Activated T-helper 1 cell treated with anti-CD3 and anti-CD28 coated beads, Interleukin-12 subunit alpha, Interleukin-12 subunit beta, Interleukin-2, Interleukin-4 antibody, amounts not matched to agents 30 ng/mL and 10 ng/mL and 1 ng/mL, durations not matched to agents 14 hours and 24 hours and 36 hours (primary cell): ENCODE measurements at regions of chr1 and their contacts with region 1.

Region 1: DNA sequence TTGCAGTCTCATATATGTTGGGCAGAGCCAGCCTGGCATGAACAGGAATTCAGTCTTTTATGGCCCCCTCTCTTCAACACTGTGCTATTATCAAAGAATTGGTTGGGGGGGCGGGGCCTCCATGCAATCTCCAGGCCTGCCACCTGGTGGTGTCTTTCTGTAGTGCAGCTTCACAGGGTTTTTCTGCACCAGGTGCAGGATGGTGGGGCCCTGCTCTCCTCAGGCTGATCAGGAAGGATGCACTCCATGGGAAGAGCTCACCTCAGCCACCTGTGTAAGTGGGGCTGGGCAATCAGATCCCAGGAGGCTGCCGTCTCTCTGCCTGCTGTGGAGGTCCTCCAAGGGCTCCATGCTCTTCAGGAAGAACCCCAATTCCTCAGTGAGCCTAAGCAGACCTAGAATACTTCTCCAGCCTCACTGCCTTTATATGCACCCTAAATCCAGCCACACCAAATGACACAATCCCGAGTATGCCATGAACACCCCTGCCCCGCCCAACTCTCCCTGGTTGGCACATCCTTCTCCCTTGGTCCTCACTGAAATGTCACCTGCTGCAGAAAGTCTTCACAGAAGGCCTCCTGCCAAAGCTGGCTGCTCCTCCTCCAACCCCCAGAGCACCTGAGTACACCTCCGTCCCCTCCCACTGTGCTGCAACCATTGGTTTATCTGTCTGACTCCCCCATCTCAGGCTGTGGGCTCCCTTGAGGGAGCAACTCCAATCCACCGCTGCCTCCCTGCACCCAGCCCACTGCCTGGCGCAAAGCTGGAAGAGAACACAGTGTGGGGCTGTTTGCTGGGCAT is 16.5 kb downstream of the STK40 start:
- DNase-seq: peak; percentile 65
- H3K4me3 Mint-ChIP-seq: no peak overlapping the region
- H3K27ac Mint-ChIP-seq: peak overlapping the region; percentile 35
- H3K4me1 Mint-ChIP-seq: peaks cover 69% of the 10 kb centered on the region
- H3K27me3 Mint-ChIP-seq: no peaks in the 10 kb centered on the region

Region 2: DNA sequence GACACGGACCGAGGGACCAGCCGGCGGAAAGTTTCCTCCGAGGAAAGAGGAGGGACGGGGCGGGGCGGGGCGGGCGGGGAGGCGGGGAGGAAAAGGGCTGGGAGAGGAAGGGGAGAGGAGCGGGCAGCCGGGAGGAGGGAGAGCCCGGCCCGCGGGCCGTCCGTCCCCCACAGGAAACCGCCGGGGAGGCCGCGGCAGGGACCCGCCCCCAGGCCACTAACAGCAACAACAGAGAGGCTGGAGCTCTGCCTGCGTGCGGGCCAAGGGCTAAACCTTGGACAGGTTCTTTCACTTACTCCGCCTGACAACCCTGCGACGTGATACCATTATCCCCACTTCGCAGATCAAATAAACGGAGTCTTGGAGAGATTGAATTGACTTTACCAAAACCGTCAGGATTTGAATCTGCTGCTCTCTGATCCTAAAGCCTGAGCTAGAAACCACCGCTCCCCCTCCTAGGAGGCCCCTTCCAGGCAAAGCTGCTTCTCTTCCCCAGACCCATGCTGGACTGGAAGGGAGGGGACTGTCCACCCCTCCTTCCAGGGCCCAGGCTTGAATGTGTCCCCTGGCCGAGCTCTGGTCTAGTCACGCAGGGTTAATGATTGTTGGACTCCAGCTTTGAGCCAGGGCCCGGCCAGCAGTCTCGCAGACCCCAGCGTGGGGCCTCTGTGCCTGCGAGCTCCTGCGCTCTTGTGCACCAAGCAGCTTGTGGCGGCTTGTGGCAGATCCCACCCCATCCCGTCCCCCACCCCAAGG is 45.5 kb before region 1 on chr1 and contains the start of gene EVA1B:
- intact Hi-C with region 1: loop called (anchors 1 kb)
- DNase-seq: peak; percentile 60
- H3K4me3 Mint-ChIP-seq: peak within 1 kb of the TSS; percentile 80
- H3K27ac Mint-ChIP-seq: peak within 1 kb of the TSS; percentile 64
- H3K4me1 Mint-ChIP-seq: peaks cover 31% of the 10 kb centered on the region
- H3K27me3 Mint-ChIP-seq: peaks cover 6% of the 10 kb centered on the region
- total RNA-seq, gene EVA1B: 10.6 and 10.9 TPM in 2 replicates

Region 3: GRCh38 chr1:36342481-36343478 is 26.5 kb before region 1 on chr1:
- intact Hi-C with region 1: loop called (anchors 1 kb)
- DNase-seq: peak; percentile 37
- H3K4me3 Mint-ChIP-seq: no peak overlapping the region
- H3K27ac Mint-ChIP-seq: peak overlapping the region; percentile 44
- H3K4me1 Mint-ChIP-seq: peaks cover 15% of the 10 kb centered on the region
- H3K27me3 Mint-ChIP-seq: no peaks in the 10 kb centered on the region

Region 4: DNA sequence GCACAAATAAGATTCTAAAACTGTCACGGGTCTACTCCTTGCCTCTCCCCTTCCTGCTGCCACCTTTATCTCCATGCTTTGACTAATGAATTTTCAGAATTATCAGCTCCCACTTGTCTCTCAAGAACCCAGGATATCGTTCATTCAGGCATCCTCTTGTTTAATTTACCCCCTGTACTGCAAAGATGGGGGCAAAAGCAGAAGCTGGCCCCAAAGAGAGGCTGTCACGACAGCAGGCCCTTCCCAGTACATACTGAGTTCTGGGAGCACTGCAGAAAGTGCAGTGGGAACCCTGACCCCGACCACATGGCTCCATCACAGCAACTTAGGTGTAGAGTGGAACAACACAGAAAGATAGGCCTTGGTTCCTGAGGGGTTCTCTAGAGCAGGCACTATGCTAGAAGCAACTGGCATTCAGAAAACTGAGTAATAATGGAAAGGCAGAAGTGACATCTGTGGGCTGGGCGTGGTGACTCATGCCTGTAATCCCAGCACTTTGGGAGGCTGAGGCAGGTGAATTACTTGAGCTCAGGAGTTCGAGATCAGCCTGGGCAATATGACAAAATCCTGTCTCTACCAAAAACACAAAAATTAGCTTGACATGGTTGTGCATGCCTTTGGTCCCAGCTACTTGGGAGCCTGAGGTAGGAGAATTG is 89.5 kb after region 1 on chr1:
- intact Hi-C with region 1: no loop called
- DNase-seq: peak; percentile 19
- H3K4me3 Mint-ChIP-seq: peak overlapping the region; percentile 79
- H3K27ac Mint-ChIP-seq: peak overlapping the region; percentile 96
- H3K4me1 Mint-ChIP-seq: peaks cover 69% of the 10 kb centered on the region
- H3K27me3 Mint-ChIP-seq: no peaks in the 10 kb centered on the region